ENCODE measurements at regions of chr15 and their contacts with region 1.

Region 1: DNA sequence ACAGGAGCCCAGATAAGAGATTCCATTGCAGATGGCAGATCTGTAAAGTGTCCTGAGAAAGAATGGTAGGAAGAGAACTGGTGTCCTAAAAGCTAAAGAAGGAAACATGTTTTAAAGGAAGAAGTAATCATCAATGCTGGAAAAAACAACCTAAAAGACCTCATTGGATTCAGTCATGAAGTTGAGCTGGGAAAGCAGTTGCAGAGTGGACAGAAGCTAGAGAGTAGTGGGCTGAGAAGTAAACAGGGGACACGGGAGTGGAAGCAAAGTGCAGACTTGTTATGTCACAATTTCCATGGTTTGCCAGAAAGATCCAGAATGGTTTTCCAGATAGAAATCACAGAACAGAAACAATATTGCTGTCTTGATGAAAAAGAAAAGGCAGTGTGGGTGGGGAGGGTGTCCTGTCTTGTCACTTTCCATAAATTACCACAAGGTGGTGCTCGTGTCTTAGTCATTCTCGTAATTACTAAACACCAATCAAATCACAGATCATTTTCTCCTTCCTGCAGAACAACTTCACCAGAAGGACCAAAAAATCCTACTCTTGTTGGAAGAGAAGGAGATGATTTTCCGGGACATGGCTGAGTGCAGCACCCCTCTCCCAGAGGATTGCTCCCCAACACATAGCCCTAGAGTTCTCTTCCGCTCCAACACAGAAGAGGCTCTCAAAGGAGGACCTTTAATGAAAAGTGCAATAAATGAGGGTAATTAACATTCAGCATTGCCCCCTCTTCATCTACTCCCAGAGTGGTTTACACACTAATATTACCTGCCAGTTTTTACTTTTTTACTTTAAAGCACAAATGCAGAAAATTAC is 64.5 kb downstream of the KLHL25 start:
- DNase-seq: peak; percentile 59
- H3K4me3 Mint-ChIP-seq: no peak overlapping the region
- H3K27ac Mint-ChIP-seq: peak overlapping the region; percentile 90
- H3K4me1 Mint-ChIP-seq: peaks cover 24% of the 10 kb centered on the region
- H3K27me3 Mint-ChIP-seq: no peaks in the 10 kb centered on the region

Region 2: DNA sequence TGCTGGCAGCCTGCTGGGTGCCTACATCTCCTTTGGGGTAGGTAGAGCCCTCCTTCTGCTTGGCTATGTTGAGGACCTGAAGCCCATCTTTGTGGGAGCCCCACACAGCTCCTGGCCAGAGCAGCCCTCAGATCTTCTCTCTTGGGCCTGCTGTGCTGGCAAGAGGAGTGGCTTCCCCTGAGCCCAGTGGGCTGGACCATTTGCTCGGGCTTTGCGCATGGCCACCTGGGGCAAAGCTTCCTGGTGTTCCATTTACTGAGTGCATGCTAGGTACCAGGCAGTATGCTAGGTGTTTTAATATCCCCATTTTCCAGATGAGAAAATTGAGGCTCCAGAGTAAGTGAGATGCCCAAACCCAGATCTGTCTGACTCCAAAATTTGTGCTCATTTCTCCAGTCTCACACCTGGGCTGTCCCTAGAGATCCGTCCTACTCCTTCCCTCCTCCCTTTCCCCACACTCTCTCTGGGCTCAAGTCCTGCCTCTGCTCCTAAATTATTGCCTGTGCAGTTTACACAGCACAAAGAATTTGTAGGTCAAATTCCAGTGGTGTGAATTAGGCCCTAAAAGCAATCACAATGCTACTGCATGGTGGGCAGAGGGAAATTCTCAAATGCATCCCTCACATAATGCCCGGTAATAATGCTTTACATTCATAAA is 806.0 kb before region 1 on chr15:
- CTCF ChIA-PET with region 1: no interaction called
- intact Hi-C with region 1: no loop called
- DNase-seq: no peak
- H3K4me3 Mint-ChIP-seq: no peak overlapping the region
- H3K27ac Mint-ChIP-seq: no peak overlapping the region
- H3K4me1 Mint-ChIP-seq: peaks cover 6% of the 10 kb centered on the region
- H3K27me3 Mint-ChIP-seq: no peaks in the 10 kb centered on the region

Region 3: GRCh38 chr15:85702321-85703101 is 27.7 kb before region 1 on chr15:
- CTCF ChIA-PET with region 1: no interaction called
- intact Hi-C with region 1: no loop called
- DNase-seq: peak; percentile 56
- H3K4me3 Mint-ChIP-seq: peak overlapping the region; percentile 58
- H3K27ac Mint-ChIP-seq: peak overlapping the region; percentile 98
- H3K4me1 Mint-ChIP-seq: peaks cover 71% of the 10 kb centered on the region
- H3K27me3 Mint-ChIP-seq: no peaks in the 10 kb centered on the region

Region 4: DNA sequence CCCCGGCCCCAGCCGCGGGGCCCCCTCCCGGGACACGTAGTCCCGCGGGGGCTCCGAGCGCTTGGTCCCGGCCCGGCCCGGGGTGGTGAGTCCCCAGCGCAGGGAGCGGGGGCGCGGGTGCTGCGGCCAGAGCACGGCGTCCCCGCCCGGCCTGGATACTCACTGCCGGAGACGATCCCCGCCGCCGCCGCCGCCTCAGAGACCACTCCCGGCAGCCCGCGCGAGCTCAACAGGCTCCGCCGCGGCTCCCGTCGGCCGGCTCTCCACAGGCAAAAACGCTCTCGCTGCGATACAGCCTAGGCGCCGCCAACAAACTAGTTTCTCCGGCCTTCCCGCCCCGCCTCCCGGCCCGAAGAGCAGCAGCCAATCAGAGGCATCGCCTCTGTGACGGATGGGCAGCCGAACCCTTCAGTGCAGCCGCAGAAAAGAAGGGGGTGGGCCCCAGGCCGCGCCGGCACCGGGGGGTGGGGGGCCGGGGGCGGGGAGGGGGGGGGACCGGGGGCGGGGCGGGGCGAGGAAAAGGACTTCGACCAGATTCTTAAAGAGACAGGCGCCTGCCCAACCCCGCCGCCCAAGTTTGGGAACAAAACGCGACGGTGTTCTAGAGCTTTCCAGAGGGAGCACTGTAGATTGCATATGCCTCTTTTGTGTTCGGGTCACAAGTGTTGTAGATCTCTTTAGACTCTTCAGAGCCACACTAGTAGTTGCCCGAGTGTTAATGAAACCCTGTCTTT is 64.6 kb after region 1 on chr15 and contains the start of gene KLHL25:
- CTCF ChIA-PET with region 1: interaction called, 3 read pairs
- intact Hi-C with region 1: loop called (anchors 5 kb)
- DNase-seq: peak; percentile 94
- H3K4me3 Mint-ChIP-seq: peak within 1 kb of the TSS; percentile 86
- H3K27ac Mint-ChIP-seq: peak within 1 kb of the TSS; percentile 50
- H3K4me1 Mint-ChIP-seq: peaks cover 34% of the 10 kb centered on the region
- H3K27me3 Mint-ChIP-seq: no peaks in the 10 kb centered on the region
- total RNA-seq, gene KLHL25: 5.3 to 5.4 TPM

Region 5: GRCh38 chr15:85831415-85832113 is 101.4 kb after region 1 on chr15:
- CTCF ChIA-PET with region 1: interaction called, 6 read pairs
- intact Hi-C with region 1: loop called (anchors 1 kb)
- DNase-seq: peak; percentile 60
- H3K4me3 Mint-ChIP-seq: no peak overlapping the region
- H3K27ac Mint-ChIP-seq: no peak overlapping the region
- H3K4me1 Mint-ChIP-seq: no peaks in the 10 kb centered on the region
- H3K27me3 Mint-ChIP-seq: no peaks in the 10 kb centered on the region

Region 6: GRCh38 chr15:85840065-85840801 is 110.0 kb after region 1 on chr15:
- CTCF ChIA-PET with region 1: interaction called, 56 read pairs
- intact Hi-C with region 1: loop called (anchors 1 kb)
- DNase-seq: peak; percentile 81
- H3K4me3 Mint-ChIP-seq: peak overlapping the region; percentile 65
- H3K27ac Mint-ChIP-seq: no peak overlapping the region
- H3K4me1 Mint-ChIP-seq: no peaks in the 10 kb centered on the region
- H3K27me3 Mint-ChIP-seq: peaks cover 3% of the 10 kb centered on the region

Region 7: DNA sequence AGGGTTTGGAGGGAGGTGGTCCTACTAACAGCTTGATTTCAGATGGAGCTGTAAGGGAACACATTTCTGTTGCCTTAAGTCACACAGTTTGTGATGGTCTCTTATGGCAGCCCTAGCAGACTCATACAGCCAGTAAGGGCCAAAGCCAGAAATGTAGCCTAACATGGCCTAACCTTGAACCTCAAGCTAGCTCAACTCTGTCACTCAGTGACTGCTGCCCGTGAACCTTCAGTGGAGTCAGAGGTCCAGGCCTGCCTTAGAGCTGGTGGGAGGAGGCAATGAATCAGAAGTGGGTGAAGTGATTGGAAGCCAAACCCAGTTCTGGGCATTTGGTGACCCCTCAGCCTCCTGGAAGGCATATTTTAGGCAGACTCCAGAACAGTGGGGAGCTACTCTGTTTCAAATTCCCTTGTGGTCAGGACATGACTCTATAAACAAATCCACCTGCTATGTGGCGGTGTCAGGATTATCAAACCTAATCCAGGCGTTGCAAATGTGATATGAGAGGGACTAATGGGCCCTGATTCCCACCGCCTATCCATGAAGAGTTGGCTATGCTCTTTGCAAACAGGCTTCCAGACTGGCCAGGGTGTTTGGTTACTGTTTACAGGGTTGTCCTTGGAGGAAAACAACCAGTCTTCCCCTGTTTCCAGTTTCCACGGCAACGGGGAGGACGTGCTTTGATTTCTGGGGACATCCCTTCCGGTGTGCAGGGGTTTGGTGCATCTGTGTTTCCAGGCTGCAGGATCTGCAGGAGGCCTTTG is 243.6 kb after region 1 on chr15:
- CTCF ChIA-PET with region 1: no interaction called
- intact Hi-C with region 1: no loop called
- DNase-seq: no peak
- H3K4me3 Mint-ChIP-seq: no peak overlapping the region
- H3K27ac Mint-ChIP-seq: no peak overlapping the region
- H3K4me1 Mint-ChIP-seq: no peaks in the 10 kb centered on the region
- H3K27me3 Mint-ChIP-seq: peaks cover 13% of the 10 kb centered on the region